Cardiac septum (tissue), 1 donor: ENCODE measurements at regions of chr6 and their contacts with region 1.

Region 1: GRCh38 chr6:18323935-18324705 is 59.8 kb upstream of the DEK start:
- DNase-seq: no peak

Region 2: DNA sequence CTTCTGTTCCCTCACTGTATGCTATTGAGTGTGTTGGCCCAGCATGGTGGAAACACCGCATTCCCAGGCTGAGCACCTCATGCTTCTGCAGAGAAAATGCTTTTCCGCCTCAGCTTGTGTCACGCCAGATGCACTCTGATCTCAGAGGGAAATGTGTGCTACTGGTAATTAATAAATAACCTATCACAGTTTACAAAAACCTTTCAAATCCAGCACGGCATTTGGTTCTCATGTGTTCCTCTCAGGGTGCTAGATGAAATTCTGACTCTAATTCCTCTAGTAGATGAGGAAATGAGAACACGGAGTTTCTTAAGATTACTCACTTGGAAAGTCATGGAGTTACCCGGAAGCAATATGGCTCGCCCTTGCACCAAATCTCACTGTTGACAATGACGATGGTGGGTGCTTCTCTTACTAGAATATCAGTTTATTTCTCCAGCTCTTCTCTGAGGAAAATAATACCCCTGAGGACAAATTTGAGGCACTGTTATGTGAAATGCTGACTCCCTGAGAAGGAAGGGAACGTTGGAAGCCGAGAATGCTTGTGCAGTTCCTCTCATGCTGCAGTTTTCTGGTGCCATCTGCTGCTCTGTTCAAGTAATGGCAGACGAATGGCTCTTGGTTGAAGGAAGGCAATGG is 179.6 kb after region 1 on chr6:
- intact Hi-C with region 1: loop called (anchors 1 kb)
- DNase-seq: no peak